MCF 10A (cell line): ENCODE measurements at regions of chr5 and their contacts with region 1.

Region 1: DNA sequence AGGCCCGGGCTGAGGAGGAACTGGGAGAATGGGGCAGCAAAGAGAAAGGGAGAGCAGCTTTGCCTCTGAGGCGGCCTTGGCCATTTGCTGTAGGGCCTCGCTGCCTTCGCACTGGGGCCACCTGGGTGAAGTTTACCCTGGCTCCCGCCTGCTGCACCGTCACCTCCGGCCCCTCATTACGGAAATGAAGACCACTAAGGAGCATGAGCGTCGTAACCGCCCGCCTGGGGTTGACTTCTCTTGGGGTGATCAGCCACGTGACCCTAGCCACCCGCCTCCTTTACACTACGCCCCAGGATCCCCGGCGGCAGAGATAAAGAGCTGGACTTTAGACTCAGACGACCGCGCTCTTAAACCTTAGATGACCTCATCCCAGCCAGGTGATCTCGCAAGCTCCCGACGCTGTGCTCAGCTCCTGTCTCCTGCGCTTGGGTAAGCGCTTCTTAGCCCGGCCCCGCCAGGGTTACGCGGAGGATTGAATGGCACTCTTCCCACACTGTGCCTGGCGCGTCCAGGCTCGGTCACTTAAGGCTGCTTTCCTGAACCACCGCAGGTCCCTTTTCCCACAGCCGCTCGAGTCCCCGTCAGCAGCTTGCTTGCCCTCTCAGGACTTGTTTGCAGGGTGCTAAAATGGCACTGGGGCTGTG is 107.9 kb upstream of the LARP1 start:
- DNase-seq: no peak
- H3K4me3 Mint-ChIP-seq: no peak overlapping the region
- H3K27ac Mint-ChIP-seq: no peak overlapping the region
- H3K4me1 Mint-ChIP-seq: no peaks in the 10 kb centered on the region
- H3K27me3 Mint-ChIP-seq: no peaks in the 10 kb centered on the region
- CTCF ChIP-seq: no peak

Region 2: DNA sequence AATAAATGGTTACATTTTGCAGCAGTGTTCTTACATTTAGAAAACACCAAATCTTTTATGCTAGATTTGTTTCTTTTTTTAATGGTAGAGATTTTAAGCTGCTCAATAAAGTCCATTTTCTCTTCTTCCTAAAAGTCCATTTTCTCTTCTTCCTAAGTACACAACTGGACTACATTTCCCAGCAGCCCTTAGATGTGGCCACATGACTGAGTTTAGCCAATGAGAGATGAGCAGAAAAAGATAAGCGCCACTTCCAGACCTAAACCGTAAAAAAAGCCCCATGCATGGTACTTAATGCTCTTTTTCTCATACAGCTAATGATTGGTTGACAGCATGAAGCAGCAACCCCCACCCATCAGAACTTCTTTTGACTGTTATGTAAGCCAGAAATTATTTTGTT is 815.3 kb before region 1 on chr5:
- CTCF ChIA-PET with region 1: no interaction called
- POLR2A ChIA-PET with region 1: no interaction called
- intact Hi-C with region 1: no loop called
- DNase-seq: peak; percentile 58
- H3K4me3 Mint-ChIP-seq: no peak overlapping the region
- H3K27ac Mint-ChIP-seq: no peak overlapping the region
- H3K4me1 Mint-ChIP-seq: no peaks in the 10 kb centered on the region
- H3K27me3 Mint-ChIP-seq: no peaks in the 10 kb centered on the region
- CTCF ChIP-seq: no peak

Region 3: GRCh38 chr5:154663424-154663823 is 16.2 kb after region 1 on chr5:
- CTCF ChIA-PET with region 1: interaction called, 14 read pairs
- POLR2A ChIA-PET with region 1: no interaction called
- intact Hi-C with region 1: no loop called
- DNase-seq: no peak
- H3K4me3 Mint-ChIP-seq: no peak overlapping the region
- H3K27ac Mint-ChIP-seq: no peak overlapping the region
- H3K4me1 Mint-ChIP-seq: no peaks in the 10 kb centered on the region
- H3K27me3 Mint-ChIP-seq: no peaks in the 10 kb centered on the region
- CTCF ChIP-seq: no peak

Region 4: GRCh38 chr5:154732212-154732611 is 85.0 kb after region 1 on chr5:
- CTCF ChIA-PET with region 1: interaction called, 11 read pairs
- POLR2A ChIA-PET with region 1: no interaction called
- intact Hi-C with region 1: no loop called
- DNase-seq: no peak
- H3K4me3 Mint-ChIP-seq: no peak overlapping the region
- H3K27ac Mint-ChIP-seq: no peak overlapping the region
- H3K4me1 Mint-ChIP-seq: peaks cover 3% of the 10 kb centered on the region
- H3K27me3 Mint-ChIP-seq: no peaks in the 10 kb centered on the region
- CTCF ChIP-seq: no peak

Region 5: GRCh38 chr5:154811653-154812365 is 164.6 kb after region 1 on chr5:
- CTCF ChIA-PET with region 1: interaction called, 37 read pairs
- POLR2A ChIA-PET with region 1: interaction called, 4 read pairs
- intact Hi-C with region 1: loop called (anchors 1 kb)
- DNase-seq: peak; percentile 77
- H3K4me3 Mint-ChIP-seq: no peak overlapping the region
- H3K27ac Mint-ChIP-seq: peak overlapping the region; percentile 4
- H3K4me1 Mint-ChIP-seq: peaks cover 15% of the 10 kb centered on the region
- H3K27me3 Mint-ChIP-seq: no peaks in the 10 kb centered on the region
- CTCF ChIP-seq: peak; percentile 94

Region 6: DNA sequence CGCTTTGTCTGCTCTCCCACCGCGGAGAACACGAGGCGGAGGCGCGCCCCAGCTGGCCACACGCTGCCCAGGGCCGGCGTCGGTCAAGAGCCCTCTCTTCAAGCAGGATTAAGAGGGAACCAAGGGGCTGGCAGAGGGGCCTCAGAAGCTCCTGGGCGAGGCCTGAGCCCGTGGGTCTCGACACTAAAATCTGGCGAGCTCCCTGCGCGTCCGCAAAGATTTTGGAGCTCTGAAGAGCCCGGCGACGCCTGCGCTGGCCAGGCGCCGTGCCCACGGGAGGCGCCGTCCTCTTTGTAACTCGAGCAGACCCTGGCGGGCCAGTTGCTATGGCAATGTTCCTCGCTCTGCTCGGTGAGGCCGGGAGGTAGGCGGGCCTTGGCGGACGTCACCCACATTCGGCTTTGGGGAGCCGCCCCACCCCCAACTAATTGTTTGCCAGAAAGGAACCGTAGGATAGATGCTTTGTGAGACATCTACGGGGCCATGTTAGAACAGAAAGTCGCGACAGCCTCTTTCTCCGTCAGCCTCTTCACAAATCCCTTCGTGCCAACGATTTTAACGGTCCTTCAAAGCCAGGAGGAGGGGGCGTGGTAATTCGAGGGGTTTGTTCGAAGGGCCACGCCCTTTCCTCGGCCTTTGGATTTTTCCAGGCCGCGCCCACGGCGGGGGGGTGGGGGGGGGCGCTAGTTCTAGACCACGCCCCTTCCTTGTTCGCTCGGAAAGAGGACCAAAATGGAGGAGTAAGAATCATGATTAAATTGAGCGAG is 210.5 kb after region 1 on chr5:
- CTCF ChIA-PET with region 1: interaction called, 7 read pairs
- POLR2A ChIA-PET with region 1: interaction called, 3 read pairs
- intact Hi-C with region 1: loop called (anchors 2 kb)
- DNase-seq: peak; percentile 99
- H3K4me3 Mint-ChIP-seq: peak overlapping the region; percentile 85
- H3K27ac Mint-ChIP-seq: peak overlapping the region; percentile 95
- H3K4me1 Mint-ChIP-seq: peaks cover 36% of the 10 kb centered on the region
- H3K27me3 Mint-ChIP-seq: no peaks in the 10 kb centered on the region
- CTCF ChIP-seq: no peak

Region 7: DNA sequence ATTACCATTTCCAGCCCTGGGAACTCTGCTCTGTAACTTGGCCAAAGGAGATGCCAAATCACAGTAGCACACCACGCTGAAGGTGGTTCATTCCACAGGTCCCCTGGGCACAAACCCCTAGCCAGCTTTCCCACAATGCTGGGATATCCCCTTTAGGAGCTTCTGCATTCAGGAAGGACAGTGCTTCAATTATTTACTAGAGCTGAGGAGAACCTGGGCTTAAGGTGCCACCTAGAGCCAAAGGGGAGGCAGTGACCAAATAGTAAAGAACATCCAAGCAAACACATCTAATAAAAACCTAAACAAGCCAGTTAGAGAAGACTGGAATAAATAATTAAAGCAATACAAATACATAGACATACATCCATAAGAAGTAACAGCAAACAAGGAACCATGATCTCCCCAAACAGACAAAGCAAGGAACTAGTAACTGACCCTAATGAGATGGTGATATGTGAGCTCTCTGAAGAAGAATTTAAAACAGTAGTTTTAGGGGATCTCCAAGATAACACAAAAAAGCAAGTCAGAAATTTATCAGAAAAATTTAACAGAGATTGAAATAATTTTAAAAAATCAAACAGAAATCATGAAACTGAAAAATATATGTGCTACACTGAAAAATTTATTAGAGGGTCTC is 380.9 kb after region 1 on chr5:
- CTCF ChIA-PET with region 1: interaction called, 4 read pairs
- POLR2A ChIA-PET with region 1: no interaction called
- intact Hi-C with region 1: loop called (anchors 1 kb)
- DNase-seq: peak; percentile 58
- H3K4me3 Mint-ChIP-seq: no peak overlapping the region
- H3K27ac Mint-ChIP-seq: no peak overlapping the region
- H3K4me1 Mint-ChIP-seq: no peaks in the 10 kb centered on the region
- H3K27me3 Mint-ChIP-seq: no peaks in the 10 kb centered on the region
- CTCF ChIP-seq: peak; percentile 67